Activated CD4-positive, alpha-beta memory T cell treated with anti-CD3 and anti-CD28 coated beads, Interleukin-2, amount 10 ng/mL, durations not matched to agents 7 days and 5 days (primary cell): ENCODE measurements at regions of chr12 and their contacts with region 1.

Region 1: GRCh38 chr12:121579981-121580868 is 598 bp downstream of the KDM2B start:
- DNase-seq: peak; percentile 80
- H3K4me3 Mint-ChIP-seq: peak overlapping the region; percentile 97
- H3K27ac Mint-ChIP-seq: peak overlapping the region; percentile 99
- H3K4me1 Mint-ChIP-seq: peaks cover 38% of the 10 kb centered on the region
- H3K27me3 Mint-ChIP-seq: no peaks in the 10 kb centered on the region

Region 2: DNA sequence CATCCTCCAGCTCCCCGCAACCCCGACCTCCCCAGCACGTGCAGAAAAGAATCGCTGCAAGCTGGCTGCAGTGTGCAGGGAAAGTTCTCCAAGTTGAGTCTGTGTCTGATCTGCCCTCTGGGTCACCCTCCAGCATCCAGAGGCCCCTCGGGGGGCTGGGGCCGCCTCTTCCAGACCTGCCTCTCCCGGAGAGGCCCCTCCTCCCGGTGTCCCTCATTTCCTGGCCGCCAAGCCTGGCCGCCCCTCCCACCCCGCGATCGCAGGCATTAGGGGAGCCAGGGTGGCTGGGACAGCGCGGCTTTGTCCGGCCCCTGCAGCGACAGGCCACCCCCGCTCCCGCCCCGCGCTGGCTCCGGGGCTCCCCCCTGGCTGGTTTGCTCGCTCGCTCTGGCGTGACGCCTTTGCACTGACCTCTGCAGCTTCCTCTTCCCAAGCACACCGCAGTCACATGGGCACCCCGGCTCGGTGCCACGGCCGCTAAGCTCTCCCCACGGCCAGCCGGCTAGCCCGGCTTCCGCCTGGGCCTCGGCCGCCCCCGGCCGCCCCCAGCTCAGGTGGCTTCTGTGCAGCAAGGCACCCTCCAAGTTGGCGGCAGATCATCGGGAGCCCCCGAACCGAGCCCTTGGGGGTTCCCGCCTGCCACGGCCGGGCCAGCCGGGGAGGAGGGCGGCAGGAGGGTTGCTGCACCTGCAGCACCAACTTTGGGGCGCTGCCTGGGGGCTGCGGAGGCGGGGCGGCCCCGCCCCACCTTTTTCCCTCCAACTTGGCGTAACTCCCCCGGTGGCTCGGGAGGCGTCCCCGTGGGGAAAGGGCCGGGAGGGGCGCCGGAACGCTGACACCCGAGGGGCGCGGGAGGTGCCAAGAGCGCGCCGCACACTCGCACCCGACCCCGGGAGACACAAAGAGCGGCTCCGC is 43.1 kb before region 1 on chr12:
- CTCF ChIA-PET with region 1: no interaction called
- POLR2A ChIA-PET with region 1: interaction called, 12 read pairs
- DNase-seq: peak; percentile 68
- H3K4me3 Mint-ChIP-seq: peak overlapping the region; percentile 74
- H3K27ac Mint-ChIP-seq: peak overlapping the region; percentile 63
- H3K4me1 Mint-ChIP-seq: peaks cover 54% of the 10 kb centered on the region
- H3K27me3 Mint-ChIP-seq: no peaks in the 10 kb centered on the region

Region 3: DNA sequence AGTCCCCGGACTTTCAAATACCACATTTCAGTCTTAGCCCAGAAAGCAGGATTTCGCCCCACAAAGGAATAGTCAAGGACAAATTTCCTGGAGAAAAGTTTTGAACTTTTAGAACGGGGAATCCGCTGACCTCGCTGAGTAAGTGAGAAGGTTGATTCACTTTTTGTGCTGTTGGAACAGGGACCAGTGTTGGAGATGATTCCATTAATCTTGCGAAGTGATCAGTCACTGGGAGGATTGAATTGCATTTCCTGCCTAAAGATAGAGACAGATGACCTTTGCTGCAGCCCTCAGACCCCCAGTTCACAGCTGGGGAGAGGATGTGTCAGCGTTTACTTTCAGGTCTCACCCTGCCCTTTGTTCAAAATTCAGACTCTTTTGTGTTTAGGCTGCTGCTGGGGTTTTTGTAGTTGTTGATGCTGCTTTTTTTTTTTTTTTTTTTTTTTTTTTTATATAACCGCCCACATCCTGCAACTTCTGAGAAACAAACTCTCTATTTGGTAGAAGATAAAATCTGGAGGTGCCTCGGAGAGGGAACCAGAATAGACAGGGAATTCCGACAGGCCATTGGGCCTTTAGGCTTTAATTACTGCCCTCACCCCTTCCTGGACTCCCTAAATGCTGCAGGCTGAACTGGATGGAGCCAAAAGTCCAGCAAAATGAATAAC is 10.4 kb after region 1 on chr12:
- CTCF ChIA-PET with region 1: interaction called, 13 read pairs
- POLR2A ChIA-PET with region 1: interaction called, 104 read pairs
- DNase-seq: peak; percentile 66
- H3K4me3 Mint-ChIP-seq: peak overlapping the region; percentile 72
- H3K27ac Mint-ChIP-seq: peak overlapping the region; percentile 100
- H3K4me1 Mint-ChIP-seq: peaks cover 33% of the 10 kb centered on the region
- H3K27me3 Mint-ChIP-seq: no peaks in the 10 kb centered on the region